Ovary (tissue), 10 donors: ENCODE measurements at regions of chr2 and their contacts with region 1.

Region 1: GRCh38 chr2:39069136-39069515 is 51.7 kb downstream of the SOS1 start:
- DNase-seq: no peak
- H3K4me3 ChIP-seq: no peak overlapping the region
- H3K27ac ChIP-seq: no peak overlapping the region
- H3K4me1 ChIP-seq: no peaks in the 10 kb centered on the region
- H3K27me3 ChIP-seq: no peaks in the 10 kb centered on the region
- CTCF ChIP-seq: no peak
- EP300 ChIP-seq: no peak
- POLR2A ChIP-seq: no peak

Region 2: DNA sequence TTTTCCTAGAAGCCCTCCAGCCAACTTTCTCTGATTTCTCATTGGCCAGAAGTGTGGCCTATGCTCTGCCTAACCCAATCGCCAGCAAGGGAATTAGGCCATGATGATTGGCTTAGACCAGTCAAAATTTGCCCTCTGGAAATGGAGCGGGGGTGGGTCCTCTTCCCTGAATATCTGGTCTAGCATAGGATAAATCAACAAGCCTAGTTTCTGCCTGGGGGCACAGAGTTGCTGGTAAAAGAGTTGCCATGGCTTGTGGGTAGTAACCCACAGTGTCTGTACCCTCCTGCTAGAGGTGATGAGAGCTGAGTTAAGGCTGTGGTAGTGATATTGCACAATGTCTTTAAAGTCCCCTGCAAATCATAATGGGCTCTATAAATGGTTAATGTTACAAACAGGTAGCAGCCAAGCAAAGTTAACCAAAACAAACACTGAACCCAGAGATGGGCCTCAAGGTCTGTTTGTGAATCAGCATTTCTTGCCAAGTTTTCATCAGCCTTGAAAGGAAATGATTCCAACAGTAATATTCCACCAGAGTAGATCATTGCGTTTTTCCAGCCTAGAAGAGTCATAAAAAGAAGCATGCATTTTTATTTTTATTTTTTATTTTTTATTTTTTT is 383.9 kb before region 1 on chr2:
- intact Hi-C with region 1: no loop called
- DNase-seq: no peak
- H3K4me3 ChIP-seq: no peak overlapping the region
- H3K27ac ChIP-seq: peak overlapping the region; percentile 27 to 55
- H3K4me1 ChIP-seq: peaks cover 6% of the 10 kb centered on the region
- H3K27me3 ChIP-seq: no peaks in the 10 kb centered on the region
- CTCF ChIP-seq: no peak
- EP300 ChIP-seq: no peak
- POLR2A ChIP-seq: no peak

Region 3: DNA sequence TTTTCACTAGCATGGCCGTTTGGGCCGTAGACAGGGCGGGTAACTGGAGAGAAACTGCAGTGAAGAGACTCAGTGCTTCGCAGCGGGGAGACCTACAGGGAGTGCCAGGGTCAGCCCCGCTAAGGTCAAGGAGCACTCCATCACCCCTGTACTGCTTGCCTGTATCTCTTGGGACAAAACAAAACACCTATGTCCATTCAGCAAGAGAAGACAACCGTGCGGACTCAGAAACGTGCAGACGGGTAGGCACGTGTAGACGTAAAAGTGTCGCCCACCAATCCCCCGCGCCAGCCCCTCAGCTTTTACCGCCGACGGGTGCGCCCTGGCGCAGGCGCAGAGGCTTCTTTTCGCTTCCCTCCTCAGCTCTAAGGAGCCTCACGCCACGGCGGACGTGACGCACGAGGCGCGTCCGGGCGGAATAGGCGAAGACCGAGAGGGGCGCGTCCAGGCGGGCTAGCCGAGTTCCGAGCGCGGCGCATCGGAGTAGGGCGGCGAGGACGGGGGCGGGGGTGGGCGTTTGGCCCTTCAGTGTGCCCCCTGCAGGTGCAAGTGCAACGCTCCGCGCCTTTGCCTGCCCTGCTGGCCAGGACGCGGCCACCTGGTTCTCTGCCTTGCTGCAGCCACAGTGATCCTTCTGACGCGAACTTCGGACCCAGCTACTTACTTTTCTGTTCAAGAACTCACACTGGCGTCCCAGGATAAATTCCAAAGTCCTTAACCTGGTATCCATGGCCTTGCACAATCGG is 55.0 kb after region 1 on chr2:
- intact Hi-C with region 1: loop called in 2 of 4 experiments (anchors 10 kb)
- DNase-seq: peak; percentile 93 to 97 (median 95)
- H3K4me3 ChIP-seq: peak overlapping the region; percentile 68
- H3K27ac ChIP-seq: peak overlapping the region; percentile 67 to 89
- H3K4me1 ChIP-seq: peaks cover 10% of the 10 kb centered on the region
- H3K27me3 ChIP-seq: no peaks in the 10 kb centered on the region
- CTCF ChIP-seq: peak in 1 of 3 donors; percentile 26
- EP300 ChIP-seq: no peak
- POLR2A ChIP-seq: peak; percentile 87